HepG2 (cell line): ENCODE measurements at regions of chr3 and their contacts with region 1.

Region 1: DNA sequence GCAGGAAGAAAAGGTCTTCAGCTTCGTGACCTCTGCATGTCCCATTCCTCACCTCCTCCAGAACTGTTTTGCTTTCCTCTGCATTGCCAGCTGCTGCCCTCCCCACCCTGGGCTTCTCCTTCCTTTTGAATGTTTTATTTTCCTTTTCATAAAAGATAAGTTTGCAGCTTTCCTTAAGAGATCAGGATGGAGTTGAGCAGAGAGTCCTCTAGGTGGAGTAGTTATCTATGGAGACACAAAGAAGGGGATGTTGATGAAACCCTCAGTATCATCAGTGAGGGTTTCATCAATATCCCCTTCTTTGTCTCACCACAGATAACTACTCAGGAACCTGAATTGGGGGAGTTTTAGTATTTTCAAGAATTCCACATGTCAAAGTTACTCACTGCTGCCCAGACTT is 19.0 kb upstream of the SLC25A36 start:
- DNase-seq: no peak
- ATAC-seq: peak; percentile 82
- H3K4me3 ChIP-seq: no peak overlapping the region
- H3K27ac ChIP-seq: no peak overlapping the region
- H3K4me1 ChIP-seq: peaks cover 8% of the 10 kb centered on the region
- H3K27me3 ChIP-seq: 0 out of 5 replicates have a peak, but pooled peaks cover 0 to under 1% of the 10 kb centered on the region in 2 experiments
- CTCF ChIP-seq: peak; percentile 42
- EP300 ChIP-seq: no peak
- POLR2A ChIP-seq: no peak
- RAD21 ChIP-seq: no peak

Region 2: DNA sequence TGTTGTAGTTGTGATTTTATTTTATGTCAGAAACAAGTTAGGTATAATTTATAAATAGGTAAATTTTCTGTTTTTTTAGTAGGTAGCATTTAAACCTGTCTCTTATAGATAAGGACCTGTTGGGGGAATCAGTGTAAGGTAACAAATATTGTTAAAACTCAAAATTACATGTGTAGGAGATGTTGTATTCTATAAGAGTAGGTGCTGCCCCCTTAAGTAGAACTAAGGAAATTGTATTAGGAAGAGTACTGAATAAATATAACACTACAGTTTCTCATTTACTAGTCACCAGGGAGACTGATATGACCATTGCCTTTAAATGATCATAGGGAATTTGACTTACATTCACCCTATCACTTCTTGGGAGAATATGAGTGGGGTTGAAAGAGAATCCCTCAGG is 50.2 kb after region 1 on chr3:
- CTCF ChIA-PET with region 1: interaction called, 12 read pairs
- POLR2A ChIA-PET with region 1: no interaction called
- in situ Hi-C with region 1: loop called (anchors 10 kb)
- intact Hi-C with region 1: loop called (anchors 1 kb)
- DNase-seq: peak; percentile 41
- ATAC-seq: peak; percentile 71
- H3K4me3 ChIP-seq: no peak overlapping the region
- H3K27ac ChIP-seq: no peak overlapping the region
- H3K4me1 ChIP-seq: peaks cover 12% of the 10 kb centered on the region; the same call in 1 of the 2 replicates
- H3K27me3 ChIP-seq: no peaks in the 10 kb centered on the region
- CTCF ChIP-seq: peak; percentile 34
- EP300 ChIP-seq: no peak
- POLR2A ChIP-seq: no peak
- RAD21 ChIP-seq: no peak

Region 3: DNA sequence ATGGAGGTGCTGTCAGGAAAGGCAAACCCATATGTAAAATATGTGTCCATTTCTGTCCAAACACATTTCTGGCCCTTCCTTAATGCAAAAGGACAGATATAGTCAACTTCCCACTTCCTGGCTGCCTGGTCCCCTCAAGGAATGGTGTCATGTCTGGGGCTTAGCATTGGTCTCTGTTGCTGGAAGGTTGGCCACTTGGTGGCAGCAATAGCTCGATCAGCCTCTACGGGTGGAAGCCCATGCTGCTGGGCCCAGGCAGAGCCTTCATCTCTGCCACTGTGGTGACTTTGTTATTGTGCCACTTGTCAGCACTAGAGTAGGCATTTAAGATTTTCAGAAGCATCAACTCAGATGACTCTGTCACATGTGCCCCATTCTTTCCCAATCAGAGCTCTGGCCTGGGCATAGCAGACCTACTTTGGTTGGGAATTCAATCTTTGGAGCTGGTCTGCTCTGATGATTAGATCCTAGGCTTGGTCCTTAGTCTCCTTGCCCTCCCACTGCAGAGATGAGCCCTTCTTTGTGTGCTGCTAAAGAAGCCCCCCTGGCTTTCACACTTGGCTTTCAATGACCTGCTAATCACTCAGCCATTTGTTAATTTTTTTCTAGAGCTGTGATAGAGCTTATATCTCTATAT is 77.5 kb after region 1 on chr3:
- CTCF ChIA-PET with region 1: no interaction called
- POLR2A ChIA-PET with region 1: no interaction called
- in situ Hi-C with region 1: no loop called
- intact Hi-C with region 1: loop called (anchors 2 kb)
- DNase-seq: peak; percentile 43
- ATAC-seq: peak; percentile 100
- H3K4me3 ChIP-seq: no peak overlapping the region
- H3K27ac ChIP-seq: no peak overlapping the region
- H3K4me1 ChIP-seq: no peaks in the 10 kb centered on the region
- H3K27me3 ChIP-seq: no peaks in the 10 kb centered on the region
- CTCF ChIP-seq: peak; percentile 87
- EP300 ChIP-seq: no peak
- POLR2A ChIP-seq: no peak
- RAD21 ChIP-seq: peak; percentile 65; the same call in 1 of the 2 replicates

Region 4: GRCh38 chr3:142148792-142149672 is 1226.4 kb after region 1 on chr3 and contains the start of gene TFDP2:
- CTCF ChIA-PET with region 1: no interaction called
- POLR2A ChIA-PET with region 1: no interaction called
- in situ Hi-C with region 1: no loop called
- intact Hi-C with region 1: no loop called
- DNase-seq: peak; percentile 78
- ATAC-seq: peak; percentile 98
- H3K4me3 ChIP-seq: peak within 1 kb of the TSS; percentile 61 to 84 (median 82)
- H3K27ac ChIP-seq: peak within 1 kb of the TSS; percentile 97
- H3K4me1 ChIP-seq: peaks cover 34% of the 10 kb centered on the region
- H3K27me3 ChIP-seq: no peaks in the 10 kb centered on the region
- CTCF ChIP-seq: no peak
- EP300 ChIP-seq: no peak; a peak in 1 of 4 replicates
- POLR2A ChIP-seq: peak; percentile 62 to 72; a peak in 3 of 4 replicates
- RAD21 ChIP-seq: peak; percentile 55; the same call in 1 of the 2 replicates
- total RNA-seq, gene TFDP2: 37.4 and 46.2 TPM in 2 replicates